Naive thymus-derived CD4-positive, alpha-beta T cell (primary cell): ENCODE measurements at regions of chr11 and their contacts with region 1.

Region 1: DNA sequence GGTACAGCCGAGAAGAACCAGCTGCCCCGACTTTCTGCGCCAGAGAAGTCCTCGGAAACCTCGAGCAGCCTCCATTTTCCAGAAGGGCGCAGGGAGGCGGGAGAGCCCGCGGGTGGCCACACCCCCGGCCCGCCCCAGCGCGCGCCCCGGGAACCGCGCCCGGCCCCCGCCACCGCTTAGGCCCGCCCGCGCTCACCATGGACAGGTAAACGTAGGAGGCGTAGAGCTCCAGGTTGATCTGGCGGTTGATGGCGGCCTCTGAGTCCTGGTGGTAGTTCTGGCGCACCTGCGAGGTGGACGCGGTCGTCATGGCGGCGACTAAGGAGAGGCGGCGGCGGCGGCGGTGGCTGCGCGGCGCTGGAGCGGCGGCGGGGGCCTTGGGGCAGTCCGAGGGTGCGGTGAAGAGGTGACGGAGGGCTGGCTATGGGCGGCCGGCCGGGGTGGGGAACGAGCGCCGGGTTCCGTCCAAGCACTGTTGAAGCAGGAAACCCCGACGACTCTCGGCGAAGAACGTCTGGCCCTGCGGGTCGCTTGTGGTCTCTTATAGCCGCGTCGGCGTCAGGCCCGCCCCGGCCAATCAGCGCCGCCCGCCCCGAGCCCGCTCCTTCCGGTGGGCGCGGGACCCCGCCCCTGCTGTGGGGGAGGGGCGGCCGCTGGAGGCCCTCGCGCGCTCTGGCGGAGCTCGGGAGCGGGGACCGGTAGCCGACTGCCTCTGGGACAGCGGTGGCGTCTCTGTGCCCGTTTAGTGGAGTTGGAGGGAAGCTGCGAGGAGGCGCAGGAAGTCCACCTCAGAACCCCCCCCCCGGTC is at the start of gene FTH1:
- DNase-seq: peak; percentile 87 to 96 (median 92)
- ATAC-seq: peak; percentile 81
- H3K4me3 ChIP-seq: peak within 1 kb of the TSS; percentile 91
- H3K4me3 Mint-ChIP-seq: peak within 1 kb of the TSS; percentile 90 to 98 (median 94)
- H3K27ac ChIP-seq: peak within 1 kb of the TSS; percentile 87
- H3K27ac Mint-ChIP-seq: peak within 1 kb of the TSS; percentile 91 to 99 (median 97)
- H3K4me1 ChIP-seq: peaks cover 18 to 38% of the 10 kb centered on the region in 2 donors
- H3K4me1 Mint-ChIP-seq: peaks cover 45 to 78% (median 72%) of the 10 kb centered on the region in 7 donors
- H3K27me3 ChIP-seq: no peaks in the 10 kb centered on the region
- H3K27me3 Mint-ChIP-seq: no peaks in the 10 kb centered on the region
- total RNA-seq, gene FTH1: 684 to 3,858 (median 993) TPM

Region 2: GRCh38 chr11:61161190-61162091 is 805.9 kb before region 1 on chr11 and contains the start of gene VPS37C:
- CTCF ChIA-PET with region 1: no interaction called
- POLR2A ChIA-PET with region 1: no interaction called
- intact Hi-C with region 1: loop called in 1 of 2 experiments (anchors 5 kb)
- DNase-seq: peak; percentile 80 to 99 (median 87)
- ATAC-seq: peak; percentile 83
- H3K4me3 ChIP-seq: peak within 1 kb of the TSS; percentile 74
- H3K4me3 Mint-ChIP-seq: peak within 1 kb of the TSS; percentile 85 to 96 (median 90)
- H3K27ac ChIP-seq: peak within 1 kb of the TSS; percentile 78
- H3K27ac Mint-ChIP-seq: peak within 1 kb of the TSS; percentile 84 to 96 (median 94)
- H3K4me1 ChIP-seq: peaks cover 7 to 14% of the 10 kb centered on the region in 2 donors
- H3K4me1 Mint-ChIP-seq: peaks cover 31 to 62% (median 48%) of the 10 kb centered on the region in 7 donors
- H3K27me3 ChIP-seq: no peaks in the 10 kb centered on the region
- H3K27me3 Mint-ChIP-seq: no peaks in the 10 kb centered on the region
- total RNA-seq, gene VPS37C: 4.1 to 12.0 (median 7.9) TPM

Region 3: GRCh38 chr11:61891331-61892084 is 75.8 kb before region 1 on chr11 and contains the start of gene FADS3:
- CTCF ChIA-PET with region 1: no interaction called
- POLR2A ChIA-PET with region 1: no interaction called
- intact Hi-C with region 1: loop called (anchors 1 to 5 kb)
- DNase-seq: peak; percentile 39 to 78 (median 45)
- ATAC-seq: peak; percentile 77
- H3K4me3 ChIP-seq: peak within 1 kb of the TSS; percentile 64
- H3K4me3 Mint-ChIP-seq: peak within 1 kb of the TSS; percentile 73 to 93 (median 82)
- H3K27ac ChIP-seq: peak within 1 kb of the TSS; percentile 69
- H3K27ac Mint-ChIP-seq: peak within 1 kb of the TSS in 7 of 9 donors; percentile 36 to 86 (median 73)
- H3K4me1 ChIP-seq: peaks cover 9% of the 10 kb centered on the region in 2 donors
- H3K4me1 Mint-ChIP-seq: peaks cover 0 to 11% (median 4%) of the 10 kb centered on the region in 7 donors
- H3K27me3 ChIP-seq: no peaks in the 10 kb centered on the region
- H3K27me3 Mint-ChIP-seq: peaks cover 0 to 10% (median 0%) of the 10 kb centered on the region in 5 donors
- total RNA-seq, gene FADS3: 1.4 to 8.6 (median 6.2) TPM

Region 4: GRCh38 chr11:61954851-61955421 is 12.4 kb before region 1 on chr11:
- CTCF ChIA-PET with region 1: interaction called, 3 read pairs
- POLR2A ChIA-PET with region 1: interaction called, 10 read pairs
- intact Hi-C with region 1: loop called in 1 of 2 experiments (anchors 1 kb)
- DNase-seq: no peak
- ATAC-seq: peak; percentile 80
- H3K4me3 ChIP-seq: no peak overlapping the region
- H3K4me3 Mint-ChIP-seq: peak overlapping the region in 8 of 10 donors; percentile 28 to 70 (median 58)
- H3K27ac ChIP-seq: no peak overlapping the region
- H3K27ac Mint-ChIP-seq: no peak overlapping the region
- H3K4me1 ChIP-seq: no peaks in the 10 kb centered on the region
- H3K4me1 Mint-ChIP-seq: peaks cover 0 to 13% (median 3%) of the 10 kb centered on the region in 7 donors
- H3K27me3 ChIP-seq: peaks cover 0 to 5% of the 10 kb centered on the region in 2 donors
- H3K27me3 Mint-ChIP-seq: peaks cover 6 to 25% (median 8%) of the 10 kb centered on the region in 5 donors

Region 5: GRCh38 chr11:62081378-62082291 is 114.3 kb after region 1 on chr11:
- CTCF ChIA-PET with region 1: interaction called, 12 read pairs
- POLR2A ChIA-PET with region 1: interaction called, 27 read pairs
- intact Hi-C with region 1: loop called (anchors 1 to 5 kb)
- DNase-seq: peak; percentile 62 to 85 (median 77)
- ATAC-seq: peak; percentile 96
- H3K4me3 ChIP-seq: no peak overlapping the region
- H3K4me3 Mint-ChIP-seq: peak overlapping the region in 9 of 10 donors; percentile 40 to 70 (median 55)
- H3K27ac ChIP-seq: no peak overlapping the region
- H3K27ac Mint-ChIP-seq: peak overlapping the region in 6 of 9 donors; percentile 10 to 91 (median 76)
- H3K4me1 ChIP-seq: peaks cover 0 to 7% of the 10 kb centered on the region in 2 donors
- H3K4me1 Mint-ChIP-seq: peaks cover 0 to 13% (median 6%) of the 10 kb centered on the region in 7 donors
- H3K27me3 ChIP-seq: no peaks in the 10 kb centered on the region
- H3K27me3 Mint-ChIP-seq: peaks cover 0 to 9% (median 0%) of the 10 kb centered on the region in 5 donors

Region 6: GRCh38 chr11:62123669-62124185 is 156.4 kb after region 1 on chr11 and contains the start of gene INCENP:
- CTCF ChIA-PET with region 1: no interaction called
- POLR2A ChIA-PET with region 1: interaction called, 5 read pairs
- intact Hi-C with region 1: loop called (anchors 1 kb)
- DNase-seq: peak; percentile 75 to 97 (median 95)
- ATAC-seq: peak; percentile 100
- H3K4me3 ChIP-seq: peak within 1 kb of the TSS; percentile 87
- H3K4me3 Mint-ChIP-seq: peak within 1 kb of the TSS; percentile 89 to 95 (median 94)
- H3K27ac ChIP-seq: peak within 1 kb of the TSS; percentile 81
- H3K27ac Mint-ChIP-seq: peak within 1 kb of the TSS; percentile 53 to 95 (median 91)
- H3K4me1 ChIP-seq: peaks cover 6 to 9% of the 10 kb centered on the region in 2 donors
- H3K4me1 Mint-ChIP-seq: peaks cover 22 to 40% (median 28%) of the 10 kb centered on the region in 7 donors
- H3K27me3 ChIP-seq: no peaks in the 10 kb centered on the region
- H3K27me3 Mint-ChIP-seq: peaks cover 0 to 15% (median 0%) of the 10 kb centered on the region in 5 donors
- total RNA-seq, gene INCENP: 18.6 to 124 (median 25.6) TPM